ENCODE measurements at regions of chr1 and their contacts with region 1.

Region 1: GRCh38 chr1:152906023-152906565 is 2.3 kb upstream of the IVL start:
- DNase-seq: no peak

Region 2: GRCh38 chr1:152842556-152842955 is 63.5 kb before region 1 on chr1 and contains the start of gene LCE6A:
- intact Hi-C with region 1: loop called in 1 of 2 experiments (anchors 10 kb)
- DNase-seq: no peak
- total RNA-seq, gene LCE6A: not detected

Measured in posterior vena cava (tissue), 2 donors.